ENCODE measurements at regions of chr20 and their contacts with region 1.

Region 1: DNA sequence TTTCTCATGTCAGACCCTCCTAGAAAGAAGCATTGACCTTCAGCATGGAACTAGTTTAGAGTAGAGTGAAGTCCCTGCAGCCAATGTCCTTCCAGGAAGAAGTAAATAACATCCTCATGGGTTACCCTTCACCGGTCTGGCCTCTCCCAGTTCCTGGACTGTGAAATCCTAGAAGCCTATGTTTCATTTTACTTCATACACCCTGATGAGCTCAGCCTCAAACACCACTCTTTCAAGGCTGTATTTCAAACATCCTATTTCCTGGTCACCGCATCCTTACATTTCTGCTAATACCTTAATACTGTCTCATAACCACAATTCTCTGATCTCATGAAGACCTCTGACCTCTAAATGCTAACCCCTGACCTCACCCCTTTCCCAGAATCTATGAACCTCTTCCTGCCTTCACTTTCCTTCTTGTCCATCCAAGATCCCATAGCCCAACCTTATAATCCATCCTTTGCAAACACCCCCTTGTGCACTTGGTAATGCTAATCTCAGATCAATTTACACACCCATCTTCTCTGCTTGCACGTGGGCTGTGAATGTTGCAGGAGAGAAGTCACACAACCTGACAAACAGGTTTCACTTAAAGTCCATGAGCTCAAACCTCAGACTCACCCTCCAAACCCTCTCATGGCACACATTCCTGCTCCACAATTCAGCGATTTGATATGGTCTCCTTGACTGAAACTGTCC is 30.1 kb downstream of the SLC2A10 start:
- DNase-seq: no peak
- H3K4me3 ChIP-seq: no peak overlapping the region
- H3K4me3 Mint-ChIP-seq: no peak overlapping the region
- H3K27ac ChIP-seq: no peak overlapping the region
- H3K27ac Mint-ChIP-seq: no peak overlapping the region
- H3K4me1 ChIP-seq: no peaks in the 10 kb centered on the region
- H3K4me1 Mint-ChIP-seq: no peaks in the 10 kb centered on the region
- H3K27me3 ChIP-seq: peaks cover 5% of the 10 kb centered on the region
- H3K27me3 Mint-ChIP-seq: peaks cover 18 to 37% of the 10 kb centered on the region in 2 donors

Region 2: DNA sequence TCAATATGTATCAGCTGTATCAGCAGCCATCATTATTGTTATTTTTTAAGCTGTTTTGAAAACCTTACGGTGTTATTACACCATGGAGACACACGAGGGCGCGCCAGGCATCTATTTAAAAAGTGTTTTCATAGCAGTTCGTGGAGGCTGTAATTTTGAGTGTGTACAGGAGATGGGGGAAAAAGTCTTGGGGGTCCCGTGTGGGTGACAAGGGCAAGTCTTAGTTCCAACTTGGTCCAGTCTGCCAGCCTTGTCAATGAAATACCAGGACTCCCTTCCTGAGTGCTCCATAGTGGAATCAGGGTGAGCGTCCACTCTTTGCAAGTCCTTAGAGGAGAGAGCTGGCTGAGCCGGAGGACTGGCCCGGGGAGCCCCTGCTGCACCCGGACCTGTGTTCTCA is 13.1 kb after region 1 on chr20:
- CTCF ChIA-PET with region 1: interaction called, 10 read pairs
- POLR2A ChIA-PET with region 1: no interaction called
- intact Hi-C with region 1: no loop called
- DNase-seq: peak in 4 of 5 donors; percentile 13 to 32 (median 24)
- H3K4me3 ChIP-seq: no peak overlapping the region
- H3K4me3 Mint-ChIP-seq: no peak overlapping the region
- H3K27ac ChIP-seq: no peak overlapping the region
- H3K27ac Mint-ChIP-seq: no peak overlapping the region
- H3K4me1 ChIP-seq: no peaks in the 10 kb centered on the region
- H3K4me1 Mint-ChIP-seq: peaks cover 0 to 4% (median 1%) of the 10 kb centered on the region in 4 donors
- H3K27me3 ChIP-seq: no peaks in the 10 kb centered on the region
- H3K27me3 Mint-ChIP-seq: peaks cover 21 to 25% of the 10 kb centered on the region in 2 donors

Measured in CD4-positive, alpha-beta memory T cell (primary cell).